PC-9 (cell line): ENCODE measurements at regions of chr16 and their contacts with region 1.

Region 1: GRCh38 chr16:14364386-14365204 is 265.5 kb downstream of the PARN start:
- DNase-seq: peak; percentile 98 to 99
- H3K4me3 ChIP-seq: peak overlapping the region; percentile 49; the same call in 1 of the 2 replicates
- H3K27ac ChIP-seq: peak overlapping the region; percentile 98
- H3K4me1 ChIP-seq: peaks cover 32% of the 10 kb centered on the region
- H3K27me3 ChIP-seq: no peaks in the 10 kb centered on the region
- CTCF ChIP-seq: no peak

Region 2: GRCh38 chr16:14300705-14301168 is 63.9 kb before region 1 on chr16:
- CTCF ChIA-PET with region 1: interaction called, 3 read pairs
- POLR2A ChIA-PET with region 1: interaction called, 3 read pairs
- intact Hi-C with region 1: loop called (anchors 1 kb)
- DNase-seq: peak; percentile 83 to 84
- H3K4me3 ChIP-seq: peak overlapping the region; percentile 73; the same call in 1 of the 2 replicates
- H3K27ac ChIP-seq: peak overlapping the region; percentile 83
- H3K4me1 ChIP-seq: peaks cover 8% of the 10 kb centered on the region
- H3K27me3 ChIP-seq: no peaks in the 10 kb centered on the region
- CTCF ChIP-seq: peak; percentile 68

Region 3: DNA sequence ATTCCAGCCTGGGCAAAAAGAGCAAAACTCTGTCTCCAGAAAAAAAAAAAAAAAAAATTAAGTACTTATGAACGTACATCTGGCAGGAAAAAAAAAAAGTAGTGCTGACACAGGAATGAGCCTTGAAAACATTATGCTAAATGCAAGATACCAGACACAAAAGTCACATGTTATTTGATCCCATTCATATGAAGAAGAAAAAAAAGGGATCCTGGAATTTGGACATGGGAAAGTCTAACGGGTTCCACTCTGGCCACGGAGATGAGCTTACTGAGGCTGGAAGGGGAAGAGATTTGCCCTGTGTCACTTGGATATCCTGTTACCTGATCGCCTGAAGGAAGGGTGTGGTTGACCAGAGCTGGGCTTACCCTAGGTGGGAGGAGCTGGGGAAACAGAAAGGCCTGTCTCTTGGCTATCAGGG is 13.5 kb after region 1 on chr16:
- CTCF ChIA-PET with region 1: interaction called, 3 read pairs
- POLR2A ChIA-PET with region 1: interaction called, 3 read pairs
- intact Hi-C with region 1: loop called (anchors 2 kb)
- DNase-seq: peak; percentile 81 to 88
- H3K4me3 ChIP-seq: no peak overlapping the region; the same call in 1 of the 2 replicates
- H3K27ac ChIP-seq: peak overlapping the region; percentile 92
- H3K4me1 ChIP-seq: peaks cover 57% of the 10 kb centered on the region
- H3K27me3 ChIP-seq: no peaks in the 10 kb centered on the region
- CTCF ChIP-seq: no peak

Region 4: GRCh38 chr16:14427371-14427948 is 62.9 kb after region 1 on chr16:
- CTCF ChIA-PET with region 1: no interaction called
- POLR2A ChIA-PET with region 1: interaction called, 5 read pairs
- intact Hi-C with region 1: loop called (anchors 1 kb)
- DNase-seq: peak; percentile 67 to 86
- H3K4me3 ChIP-seq: peak overlapping the region; percentile 6; the same call in 1 of the 2 replicates
- H3K27ac ChIP-seq: peak overlapping the region; percentile 94
- H3K4me1 ChIP-seq: peaks cover 53% of the 10 kb centered on the region
- H3K27me3 ChIP-seq: no peaks in the 10 kb centered on the region
- CTCF ChIP-seq: no peak

Region 5: GRCh38 chr16:14455576-14455975 is 91.0 kb after region 1 on chr16:
- CTCF ChIA-PET with region 1: no interaction called
- POLR2A ChIA-PET with region 1: no interaction called
- intact Hi-C with region 1: no loop called
- DNase-seq: peak in 1 of 2 experiments; percentile 74
- H3K4me3 ChIP-seq: no peak overlapping the region
- H3K27ac ChIP-seq: peak overlapping the region; percentile 4; the same call in 1 of the 2 replicates
- H3K4me1 ChIP-seq: peaks cover 11% of the 10 kb centered on the region
- H3K27me3 ChIP-seq: no peaks in the 10 kb centered on the region
- CTCF ChIP-seq: no peak

Region 6: GRCh38 chr16:14501331-14502255 is 137.0 kb after region 1 on chr16:
- CTCF ChIA-PET with region 1: no interaction called
- POLR2A ChIA-PET with region 1: no interaction called
- intact Hi-C with region 1: loop called (anchors 1 kb)
- DNase-seq: peak; percentile 94
- H3K4me3 ChIP-seq: no peak overlapping the region
- H3K27ac ChIP-seq: peak overlapping the region; percentile 98
- H3K4me1 ChIP-seq: peaks cover 98% of the 10 kb centered on the region
- H3K27me3 ChIP-seq: no peaks in the 10 kb centered on the region
- CTCF ChIP-seq: no peak